GM12878 (cell line): ENCODE measurements at regions of chr14 and their contacts with region 1.

Region 1: DNA sequence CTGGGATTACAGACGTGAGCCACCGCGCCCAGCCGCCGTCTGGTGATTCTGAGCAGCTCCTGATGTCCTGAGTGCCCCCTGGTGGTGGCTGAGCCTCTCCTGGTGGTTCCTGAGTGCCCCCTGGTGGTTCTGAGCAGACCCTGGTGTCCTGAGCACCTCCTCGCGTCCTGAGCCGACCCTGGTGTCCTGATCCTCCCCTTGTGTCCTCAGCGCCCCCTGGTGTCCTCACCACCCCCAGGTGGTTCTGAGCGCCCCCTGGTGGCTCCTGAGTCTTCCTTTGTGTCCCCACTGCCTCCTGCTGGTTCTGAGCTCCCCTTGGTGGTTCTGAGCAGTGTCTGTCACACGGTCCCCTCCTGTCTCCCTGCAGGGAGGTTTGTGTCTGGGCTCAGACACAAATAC is 1304.9 kb downstream of the TMEM121 start:
- DNase-seq: no peak
- ATAC-seq: peak; percentile 88
- H3K4me3 ChIP-seq: no peak overlapping the region
- H3K27ac ChIP-seq: no peak overlapping the region
- H3K4me1 ChIP-seq: no peaks in the 10 kb centered on the region; the same call in 1 of the 2 replicates
- H3K27me3 ChIP-seq: no peaks in the 10 kb centered on the region
- CTCF ChIP-seq: peak; percentile 93 to 99 (median 96)
- EP300 ChIP-seq: no peak
- POLR2A ChIP-seq: no peak
- RAD21 ChIP-seq: peak; percentile 43

Region 2: GRCh38 chr14:106037388-106037787 is 793.9 kb before region 1 on chr14:
- CTCF ChIA-PET with region 1: no interaction called
- POLR2A ChIA-PET with region 1: no interaction called
- RAD21 ChIA-PET with region 1: no interaction called
- SMC1A ChIA-PET with region 1: no interaction called
- in situ Hi-C with region 1: no loop called
- intact Hi-C with region 1: no loop called
- DNase-seq: no peak
- ATAC-seq: no peak
- H3K4me3 ChIP-seq: no peak overlapping the region
- H3K27ac ChIP-seq: no peak overlapping the region
- H3K4me1 ChIP-seq: no peaks in the 10 kb centered on the region
- H3K27me3 ChIP-seq: no peaks in the 10 kb centered on the region
- CTCF ChIP-seq: no peak
- EP300 ChIP-seq: no peak
- POLR2A ChIP-seq: no peak
- RAD21 ChIP-seq: no peak

Region 3: GRCh38 chr14:106657460-106657859 is 173.9 kb before region 1 on chr14:
- CTCF ChIA-PET with region 1: interaction called, 26 read pairs
- POLR2A ChIA-PET with region 1: no interaction called
- RAD21 ChIA-PET with region 1: interaction called, 4 read pairs
- SMC1A ChIA-PET with region 1: no interaction called
- in situ Hi-C with region 1: no loop called
- intact Hi-C with region 1: no loop called
- DNase-seq: no peak
- ATAC-seq: peak; percentile 70
- H3K4me3 ChIP-seq: no peak overlapping the region
- H3K27ac ChIP-seq: no peak overlapping the region
- H3K4me1 ChIP-seq: peaks cover 7% of the 10 kb centered on the region
- H3K27me3 ChIP-seq: no peaks in the 10 kb centered on the region
- CTCF ChIP-seq: peak; percentile 68 to 85 (median 81)
- EP300 ChIP-seq: no peak
- POLR2A ChIP-seq: no peak
- RAD21 ChIP-seq: peak; percentile 60

Region 4: DNA sequence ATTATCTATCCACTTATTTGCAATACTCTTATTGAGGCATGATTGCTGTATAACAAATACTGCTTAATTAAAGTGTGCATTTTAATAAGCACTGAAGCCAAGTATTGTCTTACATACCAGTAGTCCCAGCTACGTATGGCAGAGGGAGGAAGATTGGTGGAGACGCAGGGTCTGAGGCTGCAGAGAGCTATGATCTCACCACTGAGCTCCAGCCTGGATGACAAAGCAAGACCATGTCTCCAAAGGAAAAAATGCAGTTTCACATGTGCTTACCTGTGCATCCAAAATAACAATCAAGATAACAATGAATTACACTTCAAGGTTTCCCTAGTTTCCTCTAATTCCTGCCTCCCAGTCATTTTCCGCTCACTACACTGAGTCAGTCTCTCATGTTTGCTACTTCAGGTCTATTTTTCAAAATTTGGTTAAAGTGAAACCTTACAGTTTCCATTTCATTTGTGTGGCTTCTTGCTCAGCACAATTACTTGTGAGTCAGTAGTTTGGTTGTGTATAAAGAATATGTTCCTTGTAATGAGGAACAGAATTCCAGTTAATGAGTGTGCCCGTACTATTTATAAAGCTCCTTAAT is 54.8 kb before region 1 on chr14:
- CTCF ChIA-PET with region 1: interaction called, 12 read pairs
- POLR2A ChIA-PET with region 1: no interaction called
- RAD21 ChIA-PET with region 1: interaction called, 5 read pairs
- SMC1A ChIA-PET with region 1: no interaction called
- in situ Hi-C with region 1: no loop called
- intact Hi-C with region 1: no loop called
- DNase-seq: no peak
- ATAC-seq: 0 out of 3 replicates have a peak, but pooled peaks have one; percentile 16
- H3K4me3 ChIP-seq: no peak overlapping the region
- H3K27ac ChIP-seq: no peak overlapping the region
- H3K4me1 ChIP-seq: peaks cover 8% of the 10 kb centered on the region
- H3K27me3 ChIP-seq: no peaks in the 10 kb centered on the region
- CTCF ChIP-seq: no peak
- EP300 ChIP-seq: no peak
- POLR2A ChIP-seq: no peak
- RAD21 ChIP-seq: no peak

Region 5: GRCh38 chr14:106802423-106803364 is 28.6 kb before region 1 on chr14:
- CTCF ChIA-PET with region 1: interaction called, 45 read pairs
- POLR2A ChIA-PET with region 1: interaction called, 3 read pairs
- RAD21 ChIA-PET with region 1: interaction called, 8 read pairs
- SMC1A ChIA-PET with region 1: interaction called, 3 read pairs
- in situ Hi-C with region 1: no loop called
- intact Hi-C with region 1: no loop called
- DNase-seq: no peak
- ATAC-seq: peak; percentile 54; the same call in 2 of the 3 replicates
- H3K4me3 ChIP-seq: no peak overlapping the region
- H3K27ac ChIP-seq: no peak overlapping the region
- H3K4me1 ChIP-seq: no peaks in the 10 kb centered on the region
- H3K27me3 ChIP-seq: peaks cover 0 to 4% of the 10 kb centered on the region in 2 experiments; a peak in 2 of 4 replicates
- CTCF ChIP-seq: peak; percentile 29 to 53 (median 49)
- EP300 ChIP-seq: no peak
- POLR2A ChIP-seq: no peak
- RAD21 ChIP-seq: peak; percentile 54

Region 6: DNA sequence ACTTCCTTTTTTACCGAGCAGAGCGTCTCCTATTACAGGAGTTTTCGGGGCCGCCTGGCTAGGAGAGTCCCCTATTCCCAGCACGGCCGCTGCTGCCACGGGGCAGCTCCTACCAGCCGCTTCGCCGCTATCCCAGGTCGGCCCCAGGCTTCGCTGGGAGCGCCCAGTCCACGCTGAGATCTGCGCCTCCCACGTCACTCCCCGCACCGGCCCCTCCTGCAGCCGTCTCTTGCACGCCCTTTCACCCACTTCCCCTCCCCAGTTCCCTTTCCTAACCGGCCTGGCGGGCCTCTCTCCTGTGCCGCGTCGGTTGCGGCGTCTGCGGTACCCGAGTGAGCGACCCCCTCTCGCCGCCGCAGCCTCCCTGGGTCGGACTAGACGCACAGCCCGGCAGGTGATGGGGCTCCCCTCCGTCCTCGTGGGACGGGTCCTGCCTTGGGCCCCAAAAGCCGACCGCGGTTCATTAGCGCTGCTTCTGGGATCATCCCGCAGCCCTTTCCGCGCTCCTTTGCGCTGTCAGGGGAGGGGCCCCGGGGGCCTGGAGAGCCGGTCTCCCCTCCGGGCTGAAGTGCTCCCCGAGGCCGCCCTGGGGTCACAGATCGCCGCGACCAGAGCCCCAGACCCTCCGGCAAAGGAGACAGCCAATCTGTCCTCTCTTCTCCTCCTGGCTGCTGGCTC is 13.4 kb after region 1 on chr14:
- CTCF ChIA-PET with region 1: interaction called, 435 read pairs
- POLR2A ChIA-PET with region 1: interaction called, 9 read pairs
- RAD21 ChIA-PET with region 1: interaction called, 19 read pairs
- SMC1A ChIA-PET with region 1: interaction called, 21 read pairs
- in situ Hi-C with region 1: no loop called
- intact Hi-C with region 1: no loop called
- DNase-seq: no peak
- ATAC-seq: peak; percentile 71
- H3K4me3 ChIP-seq: peak overlapping the region; percentile 80
- H3K27ac ChIP-seq: peak overlapping the region; percentile 88
- H3K4me1 ChIP-seq: peaks cover 30% of the 10 kb centered on the region
- H3K27me3 ChIP-seq: no peaks in the 10 kb centered on the region
- CTCF ChIP-seq: no peak
- EP300 ChIP-seq: peak in 1 of 2 experiments; percentile 16; a peak in 1 of 4 replicates
- POLR2A ChIP-seq: peak; percentile 77
- RAD21 ChIP-seq: no peak

Region 7: GRCh38 chr14:106872611-106873446 is 41.5 kb after region 1 on chr14:
- CTCF ChIA-PET with region 1: interaction called, 605 read pairs
- POLR2A ChIA-PET with region 1: interaction called, 3 read pairs
- RAD21 ChIA-PET with region 1: interaction called, 84 read pairs
- SMC1A ChIA-PET with region 1: interaction called, 244 read pairs
- in situ Hi-C with region 1: no loop called
- intact Hi-C with region 1: no loop called
- DNase-seq: no peak
- ATAC-seq: peak; percentile 86
- H3K4me3 ChIP-seq: peak overlapping the region; percentile 50; the same call in 1 of the 2 replicates
- H3K27ac ChIP-seq: no peak overlapping the region
- H3K4me1 ChIP-seq: peaks cover 25% of the 10 kb centered on the region
- H3K27me3 ChIP-seq: peaks cover 0 to 2% of the 10 kb centered on the region in 2 experiments; a peak in 2 of 4 replicates
- CTCF ChIP-seq: peak; percentile 62 to 93 (median 75)
- EP300 ChIP-seq: no peak
- POLR2A ChIP-seq: no peak
- RAD21 ChIP-seq: peak; percentile 73